Naive thymus-derived CD4-positive, alpha-beta T cell (primary cell): ENCODE measurements at regions of chr2 and their contacts with region 1.

Region 1: DNA sequence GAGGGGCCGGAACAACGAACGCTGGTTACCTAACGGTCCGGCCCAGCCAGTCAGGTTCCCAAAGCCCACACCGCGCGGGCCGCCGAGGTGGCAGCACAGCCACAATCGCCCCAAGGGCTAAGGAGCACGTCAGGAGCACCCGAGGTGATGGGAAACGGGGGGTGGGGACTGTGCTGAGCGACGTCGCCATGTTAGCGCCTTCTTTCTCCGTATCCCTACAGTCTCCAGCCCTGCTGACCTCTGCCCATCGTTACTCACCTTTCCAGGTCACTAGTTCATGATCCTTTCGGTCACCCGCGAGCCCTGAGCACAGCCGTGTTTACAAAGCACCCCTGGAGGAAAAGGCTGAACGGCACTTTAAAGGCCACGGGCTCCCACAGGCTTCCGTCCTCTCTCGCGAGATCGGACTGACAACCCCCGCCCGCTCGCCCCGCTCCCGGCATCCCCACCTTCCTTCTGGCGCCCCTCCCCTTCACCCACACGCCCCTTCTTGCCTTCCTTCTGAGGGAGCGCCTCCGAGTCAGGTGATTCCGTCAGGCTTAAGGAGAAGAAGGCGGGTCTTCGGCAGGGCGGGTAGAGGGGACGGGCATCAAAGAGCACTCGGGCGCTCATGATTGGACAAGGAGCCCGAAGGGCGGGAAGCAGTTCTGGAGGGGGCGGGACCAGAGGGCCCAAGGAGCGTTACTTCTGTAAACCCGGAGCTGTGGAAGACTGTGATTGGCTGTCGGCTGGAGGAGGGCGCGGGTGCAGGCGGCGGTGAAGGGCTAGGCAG is at the start of gene ATF2:
- DNase-seq: peak; percentile 87 to 100 (median 98)
- ATAC-seq: peak; percentile 95
- H3K4me3 ChIP-seq: peak within 1 kb of the TSS; percentile 91
- H3K4me3 Mint-ChIP-seq: peak within 1 kb of the TSS; percentile 93 to 100 (median 98)
- H3K27ac ChIP-seq: peak within 1 kb of the TSS; percentile 91
- H3K27ac Mint-ChIP-seq: peak within 1 kb of the TSS; percentile 94 to 100 (median 99)
- H3K4me1 ChIP-seq: peaks cover 13 to 20% of the 10 kb centered on the region in 2 donors
- H3K4me1 Mint-ChIP-seq: peaks cover 21 to 75% (median 55%) of the 10 kb centered on the region in 7 donors
- H3K27me3 ChIP-seq: no peaks in the 10 kb centered on the region
- H3K27me3 Mint-ChIP-seq: no peaks in the 10 kb centered on the region
- total RNA-seq, gene ATF2: 40.5 to 67.2 (median 58.7) TPM

Region 2: DNA sequence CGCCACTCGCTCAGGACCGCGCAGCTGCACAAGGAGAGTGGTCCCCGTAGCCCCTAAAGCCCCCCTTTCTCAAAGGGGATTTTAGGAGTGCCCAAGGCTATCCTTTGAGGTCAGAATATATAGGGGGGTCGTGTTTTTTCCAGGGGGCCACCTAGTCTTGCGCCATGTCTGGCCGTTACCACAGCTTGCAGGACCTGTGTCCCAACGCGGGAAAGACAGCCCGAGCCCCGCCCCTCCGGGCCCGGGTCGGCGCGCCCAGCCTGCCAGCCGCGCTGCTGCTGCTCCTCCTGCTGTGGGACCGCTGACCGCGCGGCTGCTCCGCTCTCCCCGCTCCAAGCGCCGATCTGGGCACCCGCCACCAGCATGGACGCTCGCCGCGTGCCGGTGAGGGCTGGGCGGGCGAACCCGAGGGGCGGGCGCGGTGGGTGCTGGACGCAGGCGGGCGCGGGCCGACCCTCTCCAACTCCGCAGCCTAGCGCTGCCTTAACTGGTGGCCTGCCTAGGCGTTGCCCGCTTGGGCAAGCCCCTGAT is 1813.3 kb before region 1 on chr2 and contains the start of gene CDCA7:
- CTCF ChIA-PET with region 1: no interaction called
- POLR2A ChIA-PET with region 1: no interaction called
- intact Hi-C with region 1: loop called in 1 of 2 experiments (anchors 5 kb)
- DNase-seq: peak in 8 of 9 donors; percentile 2 to 84 (median 26)
- ATAC-seq: peak; percentile 64
- H3K4me3 ChIP-seq: peak within 1 kb of the TSS; percentile 67
- H3K4me3 Mint-ChIP-seq: peak within 1 kb of the TSS; percentile 87 to 95 (median 90)
- H3K27ac ChIP-seq: no peak within 1 kb of the TSS
- H3K27ac Mint-ChIP-seq: peak within 1 kb of the TSS in 4 of 9 donors; percentile 23 to 97 (median 46)
- H3K4me1 ChIP-seq: peaks cover 6 to 17% of the 10 kb centered on the region in 2 donors
- H3K4me1 Mint-ChIP-seq: peaks cover 7 to 57% (median 18%) of the 10 kb centered on the region in 7 donors
- H3K27me3 ChIP-seq: peaks cover 0 to 2% of the 10 kb centered on the region in 2 donors
- H3K27me3 Mint-ChIP-seq: peaks cover 18 to 62% (median 50%) of the 10 kb centered on the region in 5 donors
- total RNA-seq, gene CDCA7: 0.46 to 86.7 (median 0.85) TPM

Region 3: DNA sequence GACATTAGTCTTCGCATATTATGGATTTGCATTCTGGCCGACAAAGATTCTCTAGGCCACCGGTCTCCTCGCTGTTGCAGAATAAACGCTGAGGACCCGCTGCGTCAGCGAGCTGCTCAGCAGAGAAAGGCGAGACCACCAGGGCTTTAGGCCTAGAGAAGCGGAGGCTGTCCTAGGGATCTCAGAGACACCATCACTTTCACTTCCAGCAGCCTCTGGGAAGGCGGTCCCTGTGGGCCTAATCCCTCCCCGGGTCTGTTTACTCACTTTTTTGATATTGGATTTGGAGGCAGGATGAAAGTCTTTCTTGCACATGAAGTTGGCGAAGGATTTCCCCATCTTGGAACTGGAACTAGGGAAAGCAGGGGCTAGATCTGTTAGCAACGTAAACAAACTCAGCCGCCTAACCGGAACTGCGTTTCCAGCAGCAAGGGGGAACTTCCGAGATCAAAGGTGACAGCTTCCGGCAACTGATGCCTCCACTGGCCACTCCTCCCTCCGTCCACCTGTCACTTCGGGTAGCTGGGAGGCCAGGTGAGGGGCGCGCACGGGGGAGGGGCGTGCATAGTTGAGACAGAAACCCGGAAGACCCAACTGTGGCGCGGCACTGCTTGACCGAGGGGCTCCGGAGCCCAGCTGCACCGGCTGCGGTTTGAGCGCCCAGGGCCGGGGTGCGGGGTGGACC is 772.6 kb before region 1 on chr2 and contains the start of gene SCRN3:
- CTCF ChIA-PET with region 1: no interaction called
- POLR2A ChIA-PET with region 1: no interaction called
- intact Hi-C with region 1: loop called (anchors 5 kb)
- DNase-seq: peak; percentile 49 to 89 (median 80)
- ATAC-seq: peak; percentile 93
- H3K4me3 ChIP-seq: peak within 1 kb of the TSS; percentile 85
- H3K4me3 Mint-ChIP-seq: peak within 1 kb of the TSS; percentile 86 to 100 (median 98)
- H3K27ac ChIP-seq: peak within 1 kb of the TSS; percentile 93
- H3K27ac Mint-ChIP-seq: peak within 1 kb of the TSS; percentile 97 to 100 (median 99)
- H3K4me1 ChIP-seq: peaks cover 18 to 23% of the 10 kb centered on the region in 2 donors
- H3K4me1 Mint-ChIP-seq: peaks cover 27 to 80% (median 65%) of the 10 kb centered on the region in 7 donors
- H3K27me3 ChIP-seq: no peaks in the 10 kb centered on the region
- H3K27me3 Mint-ChIP-seq: no peaks in the 10 kb centered on the region
- total RNA-seq, gene SCRN3: 12.3 to 22.1 (median 16.4) TPM

Region 4: GRCh38 chr2:174593574-174594203 is 574.3 kb before region 1 on chr2:
- CTCF ChIA-PET with region 1: no interaction called
- POLR2A ChIA-PET with region 1: interaction called, 3 read pairs
- intact Hi-C with region 1: loop called (anchors 2 to 10 kb)
- DNase-seq: peak in 8 of 9 donors; percentile 53 to 92 (median 90)
- ATAC-seq: peak; percentile 87
- H3K4me3 ChIP-seq: peak overlapping the region; percentile 59
- H3K4me3 Mint-ChIP-seq: peak overlapping the region; percentile 87 to 100 (median 92)
- H3K27ac ChIP-seq: peak overlapping the region; percentile 90
- H3K27ac Mint-ChIP-seq: peak overlapping the region; percentile 90 to 99 (median 97)
- H3K4me1 ChIP-seq: peaks cover 42 to 44% of the 10 kb centered on the region in 2 donors
- H3K4me1 Mint-ChIP-seq: peaks cover 47 to 69% (median 59%) of the 10 kb centered on the region in 7 donors
- H3K27me3 ChIP-seq: no peaks in the 10 kb centered on the region
- H3K27me3 Mint-ChIP-seq: no peaks in the 10 kb centered on the region

Region 5: GRCh38 chr2:174748948-174749347 is 419.0 kb before region 1 on chr2:
- CTCF ChIA-PET with region 1: no interaction called
- POLR2A ChIA-PET with region 1: no interaction called
- intact Hi-C with region 1: loop called in 1 of 2 experiments (anchors 5 kb)
- DNase-seq: peak; percentile 42 to 80 (median 67)
- ATAC-seq: peak; percentile 83
- H3K4me3 ChIP-seq: no peak overlapping the region
- H3K4me3 Mint-ChIP-seq: no peak overlapping the region
- H3K27ac ChIP-seq: no peak overlapping the region
- H3K27ac Mint-ChIP-seq: peak overlapping the region in 4 of 9 donors; percentile 25 to 64 (median 44)
- H3K4me1 ChIP-seq: peaks cover 8 to 47% of the 10 kb centered on the region in 2 donors
- H3K4me1 Mint-ChIP-seq: peaks cover 7 to 31% (median 16%) of the 10 kb centered on the region in 7 donors
- H3K27me3 ChIP-seq: no peaks in the 10 kb centered on the region
- H3K27me3 Mint-ChIP-seq: peaks cover 0 to 28% (median 0%) of the 10 kb centered on the region in 5 donors

Region 6: GRCh38 chr2:175111200-175111657 is 56.7 kb before region 1 on chr2:
- CTCF ChIA-PET with region 1: no interaction called
- POLR2A ChIA-PET with region 1: no interaction called
- intact Hi-C with region 1: loop called in 1 of 2 experiments (anchors 5 kb)
- DNase-seq: peak in 6 of 9 donors; percentile 23 to 59 (median 48)
- ATAC-seq: peak; percentile 67
- H3K4me3 ChIP-seq: no peak overlapping the region
- H3K4me3 Mint-ChIP-seq: no peak overlapping the region
- H3K27ac ChIP-seq: no peak overlapping the region
- H3K27ac Mint-ChIP-seq: peak overlapping the region in 7 of 9 donors; percentile 7 to 74 (median 39)
- H3K4me1 ChIP-seq: no peaks in the 10 kb centered on the region
- H3K4me1 Mint-ChIP-seq: peaks cover 0 to 9% (median 4%) of the 10 kb centered on the region in 7 donors
- H3K27me3 ChIP-seq: no peaks in the 10 kb centered on the region
- H3K27me3 Mint-ChIP-seq: no peaks in the 10 kb centered on the region

Region 7: GRCh38 chr2:176269319-176270099 is 1101.5 kb after region 1 on chr2 and contains the start of gene MTX2:
- CTCF ChIA-PET with region 1: no interaction called
- POLR2A ChIA-PET with region 1: no interaction called
- intact Hi-C with region 1: loop called in 1 of 2 experiments (anchors 10 kb)
- DNase-seq: peak; percentile 48 to 80 (median 75)
- ATAC-seq: peak; percentile 92
- H3K4me3 ChIP-seq: peak within 1 kb of the TSS; percentile 97
- H3K4me3 Mint-ChIP-seq: peak within 1 kb of the TSS; percentile 95 to 99 (median 97)
- H3K27ac ChIP-seq: peak within 1 kb of the TSS; percentile 84
- H3K27ac Mint-ChIP-seq: peak within 1 kb of the TSS; percentile 70 to 97 (median 92)
- H3K4me1 ChIP-seq: peaks cover 7 to 8% of the 10 kb centered on the region in 2 donors
- H3K4me1 Mint-ChIP-seq: peaks cover 16 to 46% (median 39%) of the 10 kb centered on the region in 7 donors
- H3K27me3 ChIP-seq: no peaks in the 10 kb centered on the region
- H3K27me3 Mint-ChIP-seq: peaks cover 0 to 19% (median 9%) of the 10 kb centered on the region in 5 donors
- total RNA-seq, gene MTX2: 6.6 to 14.3 (median 9.3) TPM